K562 (cell line): ENCODE measurements at regions of chrX and their contacts with region 1.

Region 1: GRCh38 chrX:133792198-133792953 is 193.0 kb downstream of the GPC3 start:
- DNase-seq: peak; percentile 60 to 70 (median 68)
- ATAC-seq: peak; percentile 90
- H3K4me3 ChIP-seq: no peak overlapping the region
- H3K27ac ChIP-seq: no peak overlapping the region
- H3K4me1 ChIP-seq: no peaks in the 10 kb centered on the region; a peak in 1 of 5 replicates
- H3K27me3 ChIP-seq: no peaks in the 10 kb centered on the region
- CTCF ChIP-seq: peak; percentile 94 to 100 (median 99)
- EP300 ChIP-seq: no peak
- POLR2A ChIP-seq: no peak
- RAD21 ChIP-seq: peak; percentile 67 to 76

Region 2: DNA sequence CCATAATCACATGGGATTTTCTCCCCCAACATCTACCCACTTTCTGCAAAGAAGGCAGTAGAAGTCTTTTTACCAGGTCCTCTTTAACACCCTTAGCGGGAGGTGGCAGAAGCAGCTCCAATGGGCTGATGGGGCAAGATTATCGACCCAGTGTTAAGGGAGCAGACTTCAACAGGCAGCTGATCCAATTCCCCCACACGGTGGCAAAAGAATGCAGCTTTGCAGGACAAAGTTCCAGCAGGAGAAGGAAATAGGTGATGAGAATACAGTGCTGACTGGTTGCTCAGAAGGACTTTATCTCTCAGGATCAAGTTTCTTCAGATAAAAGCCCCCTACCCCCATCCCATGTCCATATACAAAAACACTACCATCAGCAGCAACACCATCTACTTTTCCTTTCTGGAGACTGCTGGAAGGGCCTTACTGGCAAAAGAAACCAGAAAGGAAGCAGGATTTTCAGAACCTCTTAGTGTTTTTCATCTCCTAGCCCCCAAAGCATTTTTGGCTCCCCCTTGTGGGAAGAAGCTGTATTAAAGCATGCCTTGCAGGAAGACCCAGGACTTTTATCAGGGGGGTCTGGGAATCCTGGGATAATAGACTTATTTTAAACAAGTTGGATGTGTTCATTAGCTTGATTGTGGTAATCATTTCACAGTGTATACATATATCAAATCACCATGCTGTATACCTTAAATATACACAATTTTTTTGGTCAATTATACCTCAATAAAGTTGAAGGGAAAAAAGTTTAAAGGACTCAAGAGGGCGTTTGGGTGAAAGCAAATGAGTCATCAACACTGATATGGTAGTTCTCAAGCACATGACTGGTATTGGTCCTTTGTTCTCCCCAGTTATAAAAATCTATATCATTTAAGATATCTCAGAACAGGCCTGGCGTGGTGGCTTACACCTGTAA is 46.6 kb after region 1 on chrX:
- CTCF ChIA-PET with region 1: no interaction called
- POLR2A ChIA-PET with region 1: no interaction called
- in situ Hi-C with region 1: no loop called
- intact Hi-C with region 1: loop called (anchors 2 kb)
- DNase-seq: peak; percentile 27 to 42 (median 36)
- ATAC-seq: 0 out of 3 replicates have a peak, but pooled peaks have one; percentile 42
- H3K4me3 ChIP-seq: no peak overlapping the region
- H3K27ac ChIP-seq: no peak overlapping the region
- H3K4me1 ChIP-seq: no peaks in the 10 kb centered on the region
- H3K27me3 ChIP-seq: no peaks in the 10 kb centered on the region
- CTCF ChIP-seq: peak; percentile 42 to 53 (median 52)
- EP300 ChIP-seq: no peak
- POLR2A ChIP-seq: no peak
- RAD21 ChIP-seq: peak in 1 of 2 experiments; percentile 26; a peak in 2 of 4 replicates

Region 3: DNA sequence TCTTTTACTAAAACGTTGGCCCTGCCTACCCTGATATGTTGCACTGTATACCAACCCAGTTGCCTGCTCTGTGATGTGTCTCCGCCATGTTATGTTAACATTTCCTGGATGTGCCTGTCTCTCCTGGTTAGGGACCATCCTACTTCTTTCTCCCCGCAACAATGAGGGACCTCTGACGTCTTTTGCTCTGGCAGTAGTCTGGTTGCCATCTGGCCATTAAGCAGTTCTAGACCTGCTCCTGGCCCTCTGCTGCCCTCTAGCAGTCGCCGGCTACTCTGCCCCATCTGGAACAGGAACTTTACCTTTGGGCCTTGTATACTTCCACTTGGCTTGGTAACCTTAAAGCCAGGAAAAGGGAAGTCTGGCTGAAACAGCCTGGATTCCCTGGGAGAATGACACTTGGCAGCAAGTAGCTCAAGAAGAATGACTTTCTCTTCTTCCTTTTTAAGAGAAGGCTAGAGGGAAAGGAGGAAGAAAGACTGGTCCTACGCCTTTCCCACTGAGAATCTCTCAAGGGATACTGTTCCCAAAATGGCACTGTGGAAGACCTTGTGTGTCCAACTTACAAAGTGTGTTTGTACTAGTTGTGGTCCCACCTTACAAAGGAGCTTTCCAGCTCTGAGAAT is 129.5 kb after region 1 on chrX:
- CTCF ChIA-PET with region 1: no interaction called
- POLR2A ChIA-PET with region 1: interaction called, 4 read pairs
- in situ Hi-C with region 1: no loop called
- intact Hi-C with region 1: loop called (anchors 1 kb)
- DNase-seq: peak; percentile 13 to 35 (median 18)
- ATAC-seq: peak; percentile 91
- H3K4me3 ChIP-seq: no peak overlapping the region
- H3K27ac ChIP-seq: no peak overlapping the region
- H3K4me1 ChIP-seq: no peaks in the 10 kb centered on the region
- H3K27me3 ChIP-seq: no peaks in the 10 kb centered on the region
- CTCF ChIP-seq: peak; percentile 65 to 69 (median 69)
- EP300 ChIP-seq: no peak
- POLR2A ChIP-seq: no peak
- RAD21 ChIP-seq: peak in 1 of 2 experiments; percentile 46; a peak in 3 of 4 replicates

Region 4: GRCh38 chrX:134026565-134027311 is 234.4 kb after region 1 on chrX:
- CTCF ChIA-PET with region 1: no interaction called
- POLR2A ChIA-PET with region 1: no interaction called
- in situ Hi-C with region 1: no loop called
- intact Hi-C with region 1: loop called (anchors 2 kb)
- DNase-seq: peak; percentile 9 to 25 (median 12)
- ATAC-seq: peak; percentile 76
- H3K4me3 ChIP-seq: no peak overlapping the region
- H3K27ac ChIP-seq: no peak overlapping the region
- H3K4me1 ChIP-seq: no peaks in the 10 kb centered on the region
- H3K27me3 ChIP-seq: no peaks in the 10 kb centered on the region; a peak in 1 of 5 replicates
- CTCF ChIP-seq: peak; percentile 31 to 38 (median 37); a peak in 5 of 6 replicates
- EP300 ChIP-seq: no peak
- POLR2A ChIP-seq: no peak
- RAD21 ChIP-seq: peak in 1 of 2 experiments; percentile 34; a peak in 2 of 4 replicates

Region 5: DNA sequence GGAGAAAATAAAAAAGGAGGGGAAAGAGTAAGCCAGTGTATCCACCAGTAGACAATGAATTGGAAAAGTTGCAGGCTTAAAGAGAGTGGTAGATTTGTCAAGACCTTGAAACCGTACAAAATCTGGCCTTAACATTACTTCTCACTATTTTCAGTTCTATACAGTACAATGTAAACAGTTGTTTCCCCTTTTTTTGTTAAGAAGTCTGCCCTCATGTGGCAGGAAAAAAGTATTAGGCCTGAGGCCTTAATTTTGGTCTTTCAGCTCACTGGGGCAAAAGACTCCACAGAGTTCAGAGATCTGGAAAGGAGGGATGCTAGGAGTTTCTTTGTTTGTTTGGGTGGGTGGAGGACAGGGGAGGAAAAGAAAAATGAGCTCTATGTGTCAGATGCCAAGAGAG is 351.9 kb after region 1 on chrX:
- CTCF ChIA-PET with region 1: no interaction called
- POLR2A ChIA-PET with region 1: no interaction called
- in situ Hi-C with region 1: no loop called
- intact Hi-C with region 1: loop called (anchors 2 kb)
- DNase-seq: peak in 2 of 4 experiments; percentile 4 to 8
- ATAC-seq: peak; percentile 66; the same call in 2 of the 3 replicates
- H3K4me3 ChIP-seq: no peak overlapping the region
- H3K27ac ChIP-seq: no peak overlapping the region
- H3K4me1 ChIP-seq: no peaks in the 10 kb centered on the region
- H3K27me3 ChIP-seq: no peaks in the 10 kb centered on the region
- CTCF ChIP-seq: peak; percentile 21 to 47 (median 30); a peak in 3 of 6 replicates
- EP300 ChIP-seq: no peak
- POLR2A ChIP-seq: no peak
- RAD21 ChIP-seq: peak in 1 of 2 experiments; percentile 46; a peak in 2 of 4 replicates

Region 6: GRCh38 chrX:134246282-134246681 is 453.9 kb after region 1 on chrX:
- CTCF ChIA-PET with region 1: no interaction called
- POLR2A ChIA-PET with region 1: no interaction called
- in situ Hi-C with region 1: no loop called
- intact Hi-C with region 1: loop called (anchors 10 kb)
- DNase-seq: peak in 2 of 4 experiments; percentile 11 to 26
- ATAC-seq: peak; percentile 72
- H3K4me3 ChIP-seq: no peak overlapping the region
- H3K27ac ChIP-seq: no peak overlapping the region
- H3K4me1 ChIP-seq: no peaks in the 10 kb centered on the region
- H3K27me3 ChIP-seq: no peaks in the 10 kb centered on the region
- CTCF ChIP-seq: peak; percentile 7 to 39 (median 26); a peak in 3 of 6 replicates
- EP300 ChIP-seq: no peak
- POLR2A ChIP-seq: no peak
- RAD21 ChIP-seq: peak; percentile 48 to 50; a peak in 3 of 4 replicates